Caco-2 (cell line): ENCODE measurements at regions of chr2 and their contacts with region 1.

Region 1: GRCh38 chr2:96760036-96760985 is at the start of gene CNNM4:
- DNase-seq: peak; percentile 96
- H3K4me3 ChIP-seq: peak within 1 kb of the TSS; percentile 91
- H3K4me3 Mint-ChIP-seq: peak within 1 kb of the TSS; percentile 76
- H3K27ac Mint-ChIP-seq: peak within 1 kb of the TSS; percentile 77
- H3K4me1 ChIP-seq: peaks cover 33% of the 10 kb centered on the region
- H3K4me1 Mint-ChIP-seq: peaks cover 29% of the 10 kb centered on the region
- H3K27me3 ChIP-seq: no peaks in the 10 kb centered on the region
- H3K27me3 Mint-ChIP-seq: no peaks in the 10 kb centered on the region
- CTCF ChIP-seq: peak in 1 of 2 experiments; percentile 37
- total RNA-seq, gene CNNM4: 23.2 and 28.3 TPM in 2 replicates

Region 2: GRCh38 chr2:96580771-96581170 is 179.5 kb before region 1 on chr2:
- CTCF ChIA-PET with region 1: no interaction called
- POLR2A ChIA-PET with region 1: interaction called, 10 read pairs
- intact Hi-C with region 1: no loop called
- DNase-seq: peak; percentile 56 to 60
- H3K4me3 ChIP-seq: no peak overlapping the region
- H3K4me3 Mint-ChIP-seq: no peak overlapping the region
- H3K27ac Mint-ChIP-seq: no peak overlapping the region
- H3K4me1 ChIP-seq: no peaks in the 10 kb centered on the region
- H3K4me1 Mint-ChIP-seq: no peaks in the 10 kb centered on the region
- H3K27me3 ChIP-seq: no peaks in the 10 kb centered on the region
- H3K27me3 Mint-ChIP-seq: no peaks in the 10 kb centered on the region
- CTCF ChIP-seq: peak; percentile 25 to 31

Region 3: DNA sequence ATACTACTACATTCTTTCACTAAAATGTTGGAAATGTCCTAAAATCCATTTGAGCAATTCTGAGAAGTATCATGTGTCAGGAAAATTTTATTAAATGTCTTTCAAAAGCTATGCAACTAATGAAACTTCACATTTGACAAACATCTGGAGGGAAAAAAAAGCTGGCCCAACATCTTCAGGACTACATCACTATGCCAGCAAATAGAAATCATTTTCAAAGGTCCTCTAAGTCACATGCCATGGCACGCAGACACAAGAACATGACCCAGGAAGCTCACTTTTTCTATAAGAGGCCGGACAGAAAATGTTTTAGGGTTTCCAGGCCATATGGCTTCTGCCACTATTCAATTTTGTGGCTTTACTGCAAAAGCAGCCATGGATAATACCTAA is 133.8 kb before region 1 on chr2:
- CTCF ChIA-PET with region 1: no interaction called
- POLR2A ChIA-PET with region 1: no interaction called
- intact Hi-C with region 1: no loop called
- DNase-seq: no peak
- H3K4me3 ChIP-seq: no peak overlapping the region
- H3K4me3 Mint-ChIP-seq: no peak overlapping the region
- H3K27ac Mint-ChIP-seq: no peak overlapping the region
- H3K4me1 ChIP-seq: no peaks in the 10 kb centered on the region
- H3K4me1 Mint-ChIP-seq: no peaks in the 10 kb centered on the region
- H3K27me3 ChIP-seq: no peaks in the 10 kb centered on the region
- H3K27me3 Mint-ChIP-seq: no peaks in the 10 kb centered on the region
- CTCF ChIP-seq: no peak

Region 4: GRCh38 chr2:96715658-96716057 is 44.7 kb before region 1 on chr2:
- CTCF ChIA-PET with region 1: interaction called, 3 read pairs
- POLR2A ChIA-PET with region 1: interaction called, 11 read pairs
- intact Hi-C with region 1: no loop called
- DNase-seq: no peak
- H3K4me3 ChIP-seq: no peak overlapping the region
- H3K4me3 Mint-ChIP-seq: no peak overlapping the region
- H3K27ac Mint-ChIP-seq: no peak overlapping the region
- H3K4me1 ChIP-seq: no peaks in the 10 kb centered on the region
- H3K4me1 Mint-ChIP-seq: no peaks in the 10 kb centered on the region
- H3K27me3 ChIP-seq: no peaks in the 10 kb centered on the region
- H3K27me3 Mint-ChIP-seq: no peaks in the 10 kb centered on the region
- CTCF ChIP-seq: no peak

Region 5: GRCh38 chr2:96773922-96774321 is 13.6 kb after region 1 on chr2:
- CTCF ChIA-PET with region 1: interaction called, 6 read pairs
- POLR2A ChIA-PET with region 1: interaction called, 11 read pairs
- intact Hi-C with region 1: loop called (anchors 1 kb)
- DNase-seq: no peak
- H3K4me3 ChIP-seq: no peak overlapping the region
- H3K4me3 Mint-ChIP-seq: no peak overlapping the region
- H3K27ac Mint-ChIP-seq: no peak overlapping the region
- H3K4me1 ChIP-seq: peaks cover 14% of the 10 kb centered on the region
- H3K4me1 Mint-ChIP-seq: peaks cover 26% of the 10 kb centered on the region
- H3K27me3 ChIP-seq: no peaks in the 10 kb centered on the region
- H3K27me3 Mint-ChIP-seq: no peaks in the 10 kb centered on the region
- CTCF ChIP-seq: no peak

Region 6: DNA sequence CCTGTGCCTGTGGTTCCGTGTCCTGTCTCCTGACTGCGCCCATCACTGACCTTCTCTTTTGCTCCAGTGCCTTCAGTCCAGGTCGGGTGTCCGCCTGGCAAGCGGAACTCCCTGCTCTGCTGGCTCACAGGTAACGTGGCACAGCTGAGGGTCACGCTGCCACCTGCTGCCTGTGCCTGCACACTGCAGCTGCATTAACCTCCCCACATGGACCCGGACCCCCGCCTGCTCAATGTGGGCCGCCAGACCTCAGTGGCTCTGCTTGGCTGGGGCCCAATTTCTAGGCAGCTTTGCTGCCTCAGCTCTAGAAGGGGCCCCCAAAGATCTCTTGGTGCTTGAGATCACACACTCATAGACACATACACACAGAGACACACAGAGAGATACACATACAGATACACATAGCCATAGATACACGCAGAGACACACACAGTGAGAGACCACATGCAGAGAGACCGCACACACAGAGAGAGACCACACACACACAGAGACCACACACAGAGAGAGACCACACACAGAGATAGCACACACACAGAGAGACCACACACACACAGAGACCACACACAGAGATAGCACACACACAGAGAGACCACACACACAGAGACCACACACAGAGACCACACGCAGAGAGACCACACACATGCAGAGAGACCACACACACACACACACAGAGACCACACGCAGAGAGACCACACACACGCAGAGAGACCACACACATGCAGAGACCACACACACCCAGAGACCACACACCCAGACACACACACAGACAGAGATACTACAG is 40.9 kb after region 1 on chr2:
- CTCF ChIA-PET with region 1: interaction called, 12 read pairs
- POLR2A ChIA-PET with region 1: no interaction called
- intact Hi-C with region 1: loop called (anchors 5 kb)
- DNase-seq: peak; percentile 65 to 75
- H3K4me3 ChIP-seq: no peak overlapping the region
- H3K4me3 Mint-ChIP-seq: no peak overlapping the region
- H3K27ac Mint-ChIP-seq: no peak overlapping the region
- H3K4me1 ChIP-seq: no peaks in the 10 kb centered on the region
- H3K4me1 Mint-ChIP-seq: peaks cover 1% of the 10 kb centered on the region
- H3K27me3 ChIP-seq: no peaks in the 10 kb centered on the region
- H3K27me3 Mint-ChIP-seq: no peaks in the 10 kb centered on the region
- CTCF ChIP-seq: peak; percentile 86 to 89

Region 7: DNA sequence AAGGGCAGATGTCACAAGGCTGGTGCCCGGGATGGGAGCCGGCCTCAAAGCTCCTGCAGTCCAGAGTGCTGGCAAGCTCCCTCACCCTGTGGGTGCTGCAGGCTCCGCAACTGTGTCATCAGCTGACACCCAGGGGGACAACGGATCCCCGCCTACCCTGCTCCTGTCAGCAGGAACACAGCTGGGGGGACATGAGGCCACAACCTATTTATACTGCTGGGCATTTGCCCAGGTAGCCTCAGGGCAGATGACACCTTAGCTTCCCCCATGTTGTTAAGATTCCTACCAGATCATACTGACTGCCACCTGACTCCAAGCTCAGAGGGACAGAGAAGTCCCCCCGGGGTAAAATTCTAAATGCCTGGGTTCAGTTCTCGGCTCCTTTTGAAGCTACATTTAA is 82.3 kb after region 1 on chr2:
- CTCF ChIA-PET with region 1: no interaction called
- POLR2A ChIA-PET with region 1: interaction called, 12 read pairs
- intact Hi-C with region 1: no loop called
- DNase-seq: peak in 1 of 2 experiments; percentile 57
- H3K4me3 ChIP-seq: no peak overlapping the region
- H3K4me3 Mint-ChIP-seq: no peak overlapping the region
- H3K27ac Mint-ChIP-seq: peak overlapping the region; percentile 45
- H3K4me1 ChIP-seq: peaks cover 5% of the 10 kb centered on the region
- H3K4me1 Mint-ChIP-seq: no peaks in the 10 kb centered on the region
- H3K27me3 ChIP-seq: no peaks in the 10 kb centered on the region
- H3K27me3 Mint-ChIP-seq: no peaks in the 10 kb centered on the region
- CTCF ChIP-seq: no peak